Uterus (tissue), 4 donors: ENCODE measurements at regions of chr18 and their contacts with region 1.

Region 1: DNA sequence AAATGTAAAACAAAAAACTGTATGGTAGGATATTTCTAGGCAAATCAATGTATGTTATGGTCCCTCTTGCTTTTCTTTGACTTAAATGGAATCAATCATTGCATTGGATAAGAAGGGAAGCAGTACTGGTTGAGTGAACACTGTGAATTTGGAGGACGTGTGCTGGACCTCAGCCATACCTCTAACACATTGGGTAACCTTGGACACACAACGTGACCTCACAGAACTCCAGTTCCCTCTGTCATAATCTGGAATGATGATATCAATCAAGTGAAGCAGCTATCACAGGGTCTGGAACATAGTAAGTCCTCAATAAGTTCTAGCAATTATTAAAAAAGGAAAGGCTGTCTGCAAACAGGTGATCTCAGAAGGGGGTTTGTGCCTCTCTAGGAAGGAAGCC is 474.9 kb upstream of the TCF4 start:
- DNase-seq: no peak
- H3K4me3 ChIP-seq: no peak overlapping the region
- H3K27ac ChIP-seq: no peak overlapping the region
- H3K4me1 ChIP-seq: no peaks in the 10 kb centered on the region
- H3K27me3 ChIP-seq: no peaks in the 10 kb centered on the region
- CTCF ChIP-seq: no peak
- POLR2A ChIP-seq: no peak

Region 2: GRCh38 chr18:54284981-54285785 is 1777.7 kb before region 1 on chr18:
- intact Hi-C with region 1: loop called (anchors 5 kb)
- DNase-seq: no peak
- H3K4me3 ChIP-seq: no peak overlapping the region
- H3K27ac ChIP-seq: no peak overlapping the region
- H3K4me1 ChIP-seq: no peaks in the 10 kb centered on the region
- H3K27me3 ChIP-seq: no peaks in the 10 kb centered on the region
- CTCF ChIP-seq: no peak
- POLR2A ChIP-seq: no peak

Region 3: GRCh38 chr18:56148373-56148772 is 85.4 kb after region 1 on chr18:
- intact Hi-C with region 1: no loop called
- DNase-seq: no peak
- H3K4me3 ChIP-seq: no peak overlapping the region
- H3K27ac ChIP-seq: no peak overlapping the region
- H3K4me1 ChIP-seq: no peaks in the 10 kb centered on the region
- H3K27me3 ChIP-seq: no peaks in the 10 kb centered on the region
- CTCF ChIP-seq: no peak
- POLR2A ChIP-seq: no peak